ENCODE measurements at regions of chr2 and their contacts with region 1.

Region 1: DNA sequence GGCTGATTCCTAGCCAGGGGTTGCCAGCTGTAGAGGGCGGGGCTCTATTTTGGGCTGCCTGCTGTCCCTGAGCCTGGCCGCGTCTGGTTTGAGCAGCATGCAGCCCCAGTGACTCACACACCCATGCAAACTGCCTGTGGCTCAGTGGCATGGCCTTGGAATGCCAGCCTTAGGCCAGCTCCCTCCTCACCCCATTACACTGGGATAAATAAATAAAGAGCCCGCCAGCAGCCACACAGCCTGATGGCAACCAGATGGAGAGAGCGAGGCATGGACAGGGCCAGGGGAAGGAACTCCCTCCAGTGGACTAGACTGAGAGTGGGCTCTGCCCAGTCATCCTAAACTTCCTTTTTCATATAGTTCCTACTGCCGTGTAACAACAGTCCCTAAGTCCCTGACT is 18.3 kb downstream of the NHEJ1 start:
- DNase-seq: no peak
- ATAC-seq: no peak
- H3K4me3 Mint-ChIP-seq: no peak overlapping the region
- H3K27ac Mint-ChIP-seq: no peak overlapping the region
- H3K4me1 Mint-ChIP-seq: no peaks in the 10 kb centered on the region
- H3K27me3 Mint-ChIP-seq: no peaks in the 10 kb centered on the region
- CTCF ChIP-seq: no peak

Region 2: GRCh38 chr2:219119422-219120043 is 22.8 kb before region 1 on chr2:
- CTCF ChIA-PET with region 1: interaction called, 10 read pairs
- POLR2A ChIA-PET with region 1: no interaction called
- intact Hi-C with region 1: no loop called
- DNase-seq: peak; percentile 27
- ATAC-seq: peak; percentile 50
- H3K4me3 Mint-ChIP-seq: no peak overlapping the region
- H3K27ac Mint-ChIP-seq: no peak overlapping the region
- H3K4me1 Mint-ChIP-seq: no peaks in the 10 kb centered on the region
- H3K27me3 Mint-ChIP-seq: no peaks in the 10 kb centered on the region
- CTCF ChIP-seq: no peak

Measured in activated B cell treated with CpG ODN at 0.5 μM for 24 hours (primary cell).